ENCODE measurements at regions of chr3 and their contacts with region 1.

Region 1: GRCh38 chr3:8755563-8756237 is 13.7 kb downstream of the OXTR start:
- DNase-seq: no peak
- H3K4me3 ChIP-seq: no peak overlapping the region
- H3K27ac ChIP-seq: no peak overlapping the region
- H3K4me1 ChIP-seq: peaks cover 0 to 3% (median 1%) of the 10 kb centered on the region in 4 experiments; a peak in 3 of 7 replicates
- H3K27me3 ChIP-seq: peaks cover 0 to 4% (median 0%) of the 10 kb centered on the region in 4 experiments; a peak in 2 of 7 replicates
- CTCF ChIP-seq: peak; percentile 12 to 62 (median 17)
- EP300 ChIP-seq: no peak
- POLR2A ChIP-seq: no peak
- RAD21 ChIP-seq: peak in 1 of 2 experiments; percentile 20; a peak in 3 of 4 replicates

Region 2: DNA sequence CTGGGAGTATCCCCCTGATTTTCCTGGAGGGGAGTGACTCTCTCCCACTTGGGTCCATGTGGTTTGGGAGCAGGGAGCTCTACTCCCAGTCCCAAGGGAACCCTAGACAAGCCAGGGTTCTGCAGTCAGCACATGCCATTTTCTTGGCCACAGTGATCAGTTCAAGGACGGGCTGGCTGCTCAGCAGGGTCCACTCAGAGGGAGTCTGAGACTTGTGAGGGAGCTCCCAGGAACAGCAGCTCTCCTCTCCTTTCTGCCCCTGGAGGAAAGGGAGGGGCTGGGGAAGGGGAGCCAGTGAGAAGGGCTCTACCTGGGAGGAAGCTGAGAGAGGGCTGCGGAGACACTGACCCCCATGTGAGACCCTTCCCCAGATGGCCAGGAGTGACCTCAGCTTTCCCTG is 283.2 kb before region 1 on chr3:
- CTCF ChIA-PET with region 1: no interaction called
- POLR2A ChIA-PET with region 1: no interaction called
- DNase-seq: no peak
- H3K4me3 ChIP-seq: no peak overlapping the region
- H3K27ac ChIP-seq: no peak overlapping the region
- H3K4me1 ChIP-seq: peaks cover 0 to 4% (median 2%) of the 10 kb centered on the region in 4 experiments; a peak in 2 of 7 replicates
- H3K27me3 ChIP-seq: no peaks in the 10 kb centered on the region
- CTCF ChIP-seq: no peak
- EP300 ChIP-seq: no peak
- POLR2A ChIP-seq: no peak
- RAD21 ChIP-seq: no peak

Region 3: GRCh38 chr3:8733332-8734094 is 22.2 kb before region 1 on chr3 and contains the start of gene CAV3:
- CTCF ChIA-PET with region 1: interaction called, 16 read pairs
- POLR2A ChIA-PET with region 1: no interaction called
- DNase-seq: no peak
- H3K4me3 ChIP-seq: no peak within 1 kb of the TSS
- H3K27ac ChIP-seq: no peak within 1 kb of the TSS
- H3K4me1 ChIP-seq: peaks cover 0 to 7% (median 3%) of the 10 kb centered on the region in 4 experiments; a peak in 4 of 7 replicates
- H3K27me3 ChIP-seq: peaks cover 0 to 2% (median 0%) of the 10 kb centered on the region in 4 experiments; a peak in 3 of 7 replicates
- CTCF ChIP-seq: no peak
- EP300 ChIP-seq: no peak
- POLR2A ChIP-seq: no peak
- RAD21 ChIP-seq: no peak
- total RNA-seq, gene CAV3: not detected in 2 replicates

Region 4: DNA sequence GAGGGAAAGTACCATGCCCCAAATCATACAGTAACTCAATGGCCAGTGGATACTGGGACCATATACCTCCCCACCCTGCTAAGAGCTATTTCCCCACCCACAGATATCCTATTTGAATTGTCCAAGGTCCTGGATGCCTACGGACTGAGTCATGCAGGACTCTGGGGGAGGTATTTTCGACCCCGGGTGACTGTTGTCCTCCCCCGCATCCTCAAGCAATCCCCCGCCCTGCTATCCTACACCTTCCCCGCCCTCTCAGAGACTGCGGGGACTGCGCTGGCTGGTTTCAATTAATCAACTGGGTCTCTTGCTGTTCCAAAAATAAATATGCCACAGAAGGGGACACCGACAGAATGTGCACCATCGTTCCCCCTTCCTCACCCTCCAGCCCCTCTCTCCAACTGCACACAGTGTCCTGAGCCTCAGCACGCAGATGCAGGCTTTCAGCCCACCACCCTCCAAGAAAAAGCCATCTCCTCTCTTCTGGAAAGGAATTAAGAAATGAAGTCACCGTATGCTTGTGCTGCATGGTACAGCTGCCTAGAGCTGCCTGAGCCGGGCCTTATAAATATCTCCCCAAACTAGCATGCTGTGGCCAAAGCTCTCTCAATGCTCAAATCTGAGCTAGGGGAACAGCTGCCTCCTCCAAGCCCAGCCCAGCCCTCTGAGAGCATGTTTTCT is 14.0 kb before region 1 on chr3:
- CTCF ChIA-PET with region 1: interaction called, 27 read pairs
- POLR2A ChIA-PET with region 1: interaction called, 5 read pairs
- DNase-seq: peak in 1 of 2 experiments; percentile 70
- H3K4me3 ChIP-seq: peak overlapping the region in 1 of 4 experiments; percentile 42; a peak in 3 of 8 replicates
- H3K27ac ChIP-seq: no peak overlapping the region
- H3K4me1 ChIP-seq: peaks cover 1 to 20% (median 8%) of the 10 kb centered on the region in 4 experiments
- H3K27me3 ChIP-seq: peaks cover 0 to 4% (median 0%) of the 10 kb centered on the region in 4 experiments; a peak in 1 of 7 replicates
- CTCF ChIP-seq: no peak; a peak in 1 of 4 replicates
- EP300 ChIP-seq: no peak
- POLR2A ChIP-seq: no peak
- RAD21 ChIP-seq: no peak

Region 5: GRCh38 chr3:8816106-8816505 is 60.4 kb after region 1 on chr3:
- CTCF ChIA-PET with region 1: no interaction called
- POLR2A ChIA-PET with region 1: no interaction called
- DNase-seq: no peak
- H3K4me3 ChIP-seq: no peak overlapping the region
- H3K27ac ChIP-seq: no peak overlapping the region
- H3K4me1 ChIP-seq: no peaks in the 10 kb centered on the region
- H3K27me3 ChIP-seq: no peaks in the 10 kb centered on the region
- CTCF ChIP-seq: no peak
- EP300 ChIP-seq: no peak
- POLR2A ChIP-seq: no peak
- RAD21 ChIP-seq: no peak

Measured in H1 (cell line).